Activated B cell treated with CpG ODN at 0.5 μM for 24 hours (primary cell): ENCODE measurements at regions of chr4 and their contacts with region 1.

Region 1: DNA sequence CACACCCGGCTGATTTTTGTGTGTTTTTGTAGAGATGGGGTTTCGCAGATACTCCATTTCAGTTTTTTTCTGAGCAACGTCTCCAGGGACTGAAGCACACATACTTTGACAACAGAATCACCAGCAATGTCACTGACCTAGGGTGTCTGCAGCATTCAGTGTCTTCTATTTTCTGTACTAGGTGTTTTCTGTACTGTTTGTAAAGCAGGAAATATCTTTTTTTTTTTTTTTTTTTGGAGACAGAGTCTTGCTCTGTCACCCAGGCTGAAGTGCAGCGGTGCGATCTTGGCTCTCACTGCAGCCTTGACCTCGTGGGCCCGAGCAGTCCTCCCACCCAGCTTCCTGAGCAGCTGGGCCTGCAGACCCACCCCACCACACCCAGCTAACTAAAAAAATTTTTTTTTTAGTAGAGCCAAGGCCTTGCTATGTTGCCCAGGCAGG is 8.9 kb downstream of the ADD1 start:
- DNase-seq: no peak
- ATAC-seq: peak; percentile 77
- H3K4me3 Mint-ChIP-seq: peak overlapping the region; percentile 73
- H3K27ac Mint-ChIP-seq: peak overlapping the region; percentile 82
- H3K4me1 Mint-ChIP-seq: peaks cover 91% of the 10 kb centered on the region
- H3K27me3 Mint-ChIP-seq: no peaks in the 10 kb centered on the region
- CTCF ChIP-seq: no peak

Region 2: GRCh38 chr4:2689825-2690700 is 162.4 kb before region 1 on chr4:
- CTCF ChIA-PET with region 1: no interaction called
- POLR2A ChIA-PET with region 1: interaction called, 9 read pairs
- intact Hi-C with region 1: loop called (anchors 5 kb)
- DNase-seq: peak; percentile 78
- ATAC-seq: peak; percentile 85
- H3K4me3 Mint-ChIP-seq: peak overlapping the region; percentile 75
- H3K27ac Mint-ChIP-seq: peak overlapping the region; percentile 95
- H3K4me1 Mint-ChIP-seq: peaks cover 70% of the 10 kb centered on the region
- H3K27me3 Mint-ChIP-seq: no peaks in the 10 kb centered on the region
- CTCF ChIP-seq: no peak

Region 3: GRCh38 chr4:2811830-2812611 is 40.5 kb before region 1 on chr4:
- CTCF ChIA-PET with region 1: no interaction called
- POLR2A ChIA-PET with region 1: interaction called, 11 read pairs
- intact Hi-C with region 1: no loop called
- DNase-seq: peak; percentile 65
- ATAC-seq: peak; percentile 80
- H3K4me3 Mint-ChIP-seq: peak overlapping the region; percentile 85
- H3K27ac Mint-ChIP-seq: peak overlapping the region; percentile 96
- H3K4me1 Mint-ChIP-seq: peaks cover 89% of the 10 kb centered on the region
- H3K27me3 Mint-ChIP-seq: no peaks in the 10 kb centered on the region
- CTCF ChIP-seq: no peak

Region 4: GRCh38 chr4:2832349-2833239 is 19.9 kb before region 1 on chr4:
- CTCF ChIA-PET with region 1: no interaction called
- POLR2A ChIA-PET with region 1: interaction called, 29 read pairs
- intact Hi-C with region 1: loop called (anchors 1 kb)
- DNase-seq: peak; percentile 65
- ATAC-seq: peak; percentile 85
- H3K4me3 Mint-ChIP-seq: peak overlapping the region; percentile 67
- H3K27ac Mint-ChIP-seq: peak overlapping the region; percentile 83
- H3K4me1 Mint-ChIP-seq: peaks cover 60% of the 10 kb centered on the region
- H3K27me3 Mint-ChIP-seq: no peaks in the 10 kb centered on the region
- CTCF ChIP-seq: no peak

Region 5: GRCh38 chr4:2837904-2838496 is 14.5 kb before region 1 on chr4:
- CTCF ChIA-PET with region 1: no interaction called
- POLR2A ChIA-PET with region 1: interaction called, 29 read pairs
- intact Hi-C with region 1: loop called (anchors 1 kb)
- DNase-seq: peak; percentile 32
- ATAC-seq: peak; percentile 54
- H3K4me3 Mint-ChIP-seq: peak overlapping the region; percentile 74
- H3K27ac Mint-ChIP-seq: peak overlapping the region; percentile 81
- H3K4me1 Mint-ChIP-seq: peaks cover 74% of the 10 kb centered on the region
- H3K27me3 Mint-ChIP-seq: no peaks in the 10 kb centered on the region
- CTCF ChIP-seq: no peak

Region 6: DNA sequence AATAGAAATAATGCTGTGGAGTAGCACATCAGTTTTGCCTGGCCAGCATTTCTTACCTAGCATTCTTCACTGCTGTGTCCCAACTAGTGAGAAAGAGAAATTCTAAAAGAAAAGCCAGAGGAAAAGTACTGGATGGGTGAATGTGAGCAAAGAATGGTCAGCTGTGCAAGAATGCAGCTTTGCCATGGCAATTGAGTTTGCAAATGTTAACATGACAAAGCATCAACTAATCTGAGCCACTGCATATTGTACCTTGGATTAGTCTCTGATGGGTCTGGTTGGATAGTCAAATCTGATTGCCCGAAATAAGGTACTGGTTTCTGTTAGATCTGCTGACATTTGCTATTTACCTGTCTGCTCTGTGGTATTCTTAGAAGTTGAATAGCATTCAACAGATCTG is 29.8 kb after region 1 on chr4:
- CTCF ChIA-PET with region 1: no interaction called
- POLR2A ChIA-PET with region 1: no interaction called
- intact Hi-C with region 1: loop called (anchors 5 kb)
- DNase-seq: no peak
- ATAC-seq: no peak
- H3K4me3 Mint-ChIP-seq: no peak overlapping the region
- H3K27ac Mint-ChIP-seq: no peak overlapping the region
- H3K4me1 Mint-ChIP-seq: peaks cover 7% of the 10 kb centered on the region
- H3K27me3 Mint-ChIP-seq: no peaks in the 10 kb centered on the region
- CTCF ChIP-seq: no peak

Region 7: GRCh38 chr4:3322059-3322550 is 469.6 kb after region 1 on chr4:
- CTCF ChIA-PET with region 1: no interaction called
- POLR2A ChIA-PET with region 1: no interaction called
- intact Hi-C with region 1: no loop called
- DNase-seq: no peak
- ATAC-seq: no peak
- H3K4me3 Mint-ChIP-seq: no peak overlapping the region
- H3K27ac Mint-ChIP-seq: no peak overlapping the region
- H3K4me1 Mint-ChIP-seq: no peaks in the 10 kb centered on the region
- H3K27me3 Mint-ChIP-seq: peaks cover 1% of the 10 kb centered on the region
- CTCF ChIP-seq: no peak